ENCODE measurements at regions of chr9 and their contacts with region 1.

Region 1: DNA sequence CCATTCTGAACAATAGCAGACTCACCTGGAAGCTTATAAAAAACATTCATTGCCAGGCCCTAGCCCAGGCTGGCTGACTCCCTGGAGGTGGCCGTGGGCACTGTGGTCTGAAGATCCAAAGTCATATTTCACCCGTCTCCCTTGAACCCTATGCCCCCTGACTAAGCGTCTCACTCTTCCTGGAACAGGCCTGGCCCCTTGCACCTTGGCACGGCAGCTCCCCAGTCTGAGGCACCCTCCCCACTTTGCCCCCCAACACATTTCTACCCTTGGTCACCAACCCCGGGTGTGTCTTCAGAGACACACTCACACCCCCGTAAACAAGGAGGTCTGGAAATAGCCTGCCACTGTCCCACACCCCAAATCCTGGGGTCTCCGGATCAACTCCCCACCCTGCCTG is 68.6 kb upstream of the LMX1B start:
- DNase-seq: no peak
- ATAC-seq: no peak
- H3K4me3 ChIP-seq: no peak overlapping the region
- H3K27ac ChIP-seq: no peak overlapping the region
- H3K4me1 ChIP-seq: no peaks in the 10 kb centered on the region
- H3K27me3 ChIP-seq: no peaks in the 10 kb centered on the region
- CTCF ChIP-seq: no peak

Region 2: GRCh38 chr9:126420643-126421577 is 124.2 kb before region 1 on chr9:
- CTCF ChIA-PET with region 1: no interaction called
- POLR2A ChIA-PET with region 1: no interaction called
- intact Hi-C with region 1: no loop called
- DNase-seq: peak; percentile 87
- ATAC-seq: peak; percentile 94
- H3K4me3 ChIP-seq: no peak overlapping the region
- H3K27ac ChIP-seq: peak overlapping the region; percentile 97
- H3K4me1 ChIP-seq: peaks cover 21% of the 10 kb centered on the region
- H3K27me3 ChIP-seq: no peaks in the 10 kb centered on the region
- CTCF ChIP-seq: no peak

Region 3: DNA sequence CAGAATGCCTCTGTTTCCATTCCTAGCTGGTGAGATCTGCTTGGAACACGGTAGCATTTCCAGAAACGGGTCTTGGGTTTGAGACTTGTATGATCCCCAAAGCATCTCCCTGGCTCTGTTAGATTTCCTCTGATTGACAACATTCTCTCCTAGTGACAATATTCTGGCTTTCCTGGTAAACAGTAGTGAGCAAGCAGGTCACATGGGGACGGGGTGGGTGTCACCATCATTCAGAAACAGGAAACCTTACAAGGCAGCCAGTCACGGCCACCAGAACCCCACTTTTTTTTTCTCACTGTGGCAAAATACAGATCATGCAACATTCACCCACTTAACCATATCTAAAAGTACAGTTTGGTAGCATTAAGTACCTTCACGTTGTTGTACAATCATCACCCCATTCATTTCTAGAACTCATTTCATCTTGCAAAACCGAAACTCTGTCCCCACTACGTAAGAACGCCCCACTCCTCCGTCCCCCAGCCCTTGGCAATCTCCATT is 21.4 kb before region 1 on chr9:
- CTCF ChIA-PET with region 1: no interaction called
- POLR2A ChIA-PET with region 1: interaction called, 16 read pairs
- intact Hi-C with region 1: no loop called
- DNase-seq: no peak
- ATAC-seq: no peak
- H3K4me3 ChIP-seq: no peak overlapping the region
- H3K27ac ChIP-seq: no peak overlapping the region
- H3K4me1 ChIP-seq: no peaks in the 10 kb centered on the region
- H3K27me3 ChIP-seq: peaks cover 27% of the 10 kb centered on the region
- CTCF ChIP-seq: no peak

Region 4: GRCh38 chr9:126999315-127000068 is 454.4 kb after region 1 on chr9:
- CTCF ChIA-PET with region 1: no interaction called
- POLR2A ChIA-PET with region 1: no interaction called
- intact Hi-C with region 1: no loop called
- DNase-seq: no peak
- ATAC-seq: no peak
- H3K4me3 ChIP-seq: no peak overlapping the region
- H3K27ac ChIP-seq: no peak overlapping the region
- H3K4me1 ChIP-seq: no peaks in the 10 kb centered on the region
- H3K27me3 ChIP-seq: no peaks in the 10 kb centered on the region
- CTCF ChIP-seq: no peak